Heart right ventricle (tissue), 16 donors: ENCODE measurements at regions of chr22 and their contacts with region 1.

Region 1: GRCh38 chr22:17638432-17639246 is at the start of gene BCL2L13:
- DNase-seq: peak; percentile 91
- ATAC-seq: peak; percentile 97 to 99 (median 98)
- H3K4me3 ChIP-seq: peak within 1 kb of the TSS; percentile 52 to 92 (median 76)
- H3K27ac ChIP-seq: peak within 1 kb of the TSS; percentile 93 to 100 (median 98)
- H3K4me1 ChIP-seq: peaks cover 3 to 27% (median 24%) of the 10 kb centered on the region in 9 donors
- H3K27me3 ChIP-seq: no peaks in the 10 kb centered on the region
- CTCF ChIP-seq: peak in 1 of 9 donors; percentile 17
- total RNA-seq, gene BCL2L13: 75.9 to 113 (median 91.2) TPM

Region 2: DNA sequence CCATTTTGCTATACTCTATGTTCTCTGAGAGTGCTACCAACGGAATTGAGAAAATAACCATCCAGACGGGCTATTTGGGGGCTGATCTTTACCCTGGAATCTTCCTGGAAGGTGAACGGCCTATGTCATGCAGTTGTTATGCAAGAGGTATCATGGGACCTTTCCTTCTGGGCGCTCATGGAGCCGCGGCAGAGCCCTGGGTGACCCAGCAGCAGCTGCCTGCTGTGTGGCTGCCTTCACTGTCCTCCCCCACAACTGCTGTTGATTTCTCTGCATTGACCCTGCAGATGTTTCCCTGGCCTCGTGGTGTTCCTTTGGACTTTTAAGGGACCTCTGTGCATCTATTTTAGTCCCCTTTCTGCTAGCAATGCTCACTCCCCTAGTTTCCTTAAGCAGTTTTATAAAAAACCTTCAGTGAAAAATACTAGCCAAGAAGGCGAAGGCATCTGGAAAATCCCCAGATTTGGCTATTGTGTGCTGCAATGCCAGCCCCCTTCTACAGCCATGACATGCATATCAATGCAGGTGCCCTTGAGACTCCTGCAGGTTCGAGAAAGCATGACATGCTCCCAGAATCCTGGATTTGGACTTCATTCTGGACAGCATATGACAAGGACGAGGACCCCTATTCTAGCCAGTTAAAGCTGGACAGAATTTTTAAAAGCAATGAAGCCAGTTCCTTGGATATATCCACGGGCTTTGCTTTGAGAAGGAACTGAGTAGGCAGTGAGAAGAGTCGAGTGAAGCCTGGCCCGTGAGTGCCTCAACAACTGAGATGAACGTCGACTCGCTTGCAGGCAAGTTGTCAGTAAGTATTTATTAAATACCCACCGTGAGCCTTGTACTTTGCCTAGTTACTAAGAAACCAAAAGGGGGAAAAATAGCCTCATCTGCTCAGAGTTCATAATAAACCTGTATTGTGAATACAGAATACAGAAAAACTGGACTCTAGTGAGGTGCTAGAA is 75.5 kb before region 1 on chr22 and contains the start of gene SLC25A18:
- intact Hi-C with region 1: loop called in 2 of 10 experiments (anchors 2 kb)
- DNase-seq: peak; percentile 50 to 64
- ATAC-seq: peak; percentile 78 to 94 (median 92)
- H3K4me3 ChIP-seq: peak within 1 kb of the TSS in 5 of 10 donors; percentile 1 to 23 (median 5)
- H3K27ac ChIP-seq: peak within 1 kb of the TSS; percentile 55 to 88 (median 82)
- H3K4me1 ChIP-seq: peaks cover 9 to 33% (median 21%) of the 10 kb centered on the region in 9 donors
- H3K27me3 ChIP-seq: no peaks in the 10 kb centered on the region
- CTCF ChIP-seq: peak in 2 of 9 donors; percentile 4 to 14
- total RNA-seq, gene SLC25A18: 0.65 to 13.6 (median 0.87) TPM

Region 3: DNA sequence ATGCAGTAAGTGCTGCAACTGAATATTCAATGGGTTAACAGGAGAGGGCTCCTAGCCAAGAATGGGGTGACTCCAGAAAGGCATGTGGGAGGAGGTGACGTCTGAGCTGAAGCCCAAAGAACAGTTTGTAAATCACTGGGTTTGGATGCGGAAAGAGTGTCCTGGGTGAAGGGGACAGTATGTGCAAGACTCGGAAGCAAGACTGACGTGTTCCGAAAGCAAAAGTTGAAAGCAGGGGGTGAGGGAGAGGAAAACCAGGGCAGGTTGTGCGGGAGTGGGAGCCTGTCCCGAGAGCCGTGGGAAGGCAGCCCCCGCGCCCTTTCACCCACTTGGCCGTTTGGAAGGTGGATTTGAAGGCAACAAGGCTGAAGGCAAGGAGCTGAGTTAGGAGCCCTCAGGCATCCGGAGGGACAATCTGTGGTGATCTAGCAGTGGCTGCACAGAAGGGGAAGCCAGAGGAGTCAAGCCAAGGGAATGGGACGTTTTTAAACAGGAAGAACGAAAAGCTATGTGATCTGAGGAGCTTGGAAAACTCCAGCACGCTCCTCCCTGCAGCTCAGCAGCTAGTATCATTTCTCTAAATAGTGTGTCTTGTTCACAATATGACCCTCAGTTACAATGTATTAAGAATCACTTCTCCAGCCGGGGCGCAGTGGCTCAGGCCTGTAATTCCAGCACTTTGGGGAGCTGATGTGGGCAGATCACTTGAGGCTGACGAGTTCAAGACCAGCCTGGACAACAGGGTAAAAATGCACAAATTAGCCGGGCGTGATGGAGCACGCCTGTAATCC is 67.6 kb before region 1 on chr22:
- intact Hi-C with region 1: loop called in 3 of 10 experiments (anchors 2 kb)
- DNase-seq: peak; percentile 78 to 87
- ATAC-seq: peak; percentile 84 to 96 (median 94)
- H3K4me3 ChIP-seq: peak overlapping the region in 9 of 10 donors; percentile 3 to 51 (median 41)
- H3K27ac ChIP-seq: peak overlapping the region; percentile 81 to 94 (median 86)
- H3K4me1 ChIP-seq: peaks cover 11 to 35% (median 27%) of the 10 kb centered on the region in 9 donors
- H3K27me3 ChIP-seq: no peaks in the 10 kb centered on the region
- CTCF ChIP-seq: no peak

Region 4: GRCh38 chr22:17628304-17629166 is 10.1 kb before region 1 on chr22 and contains the start of gene ATP6V1E1:
- intact Hi-C with region 1: loop called in 1 of 10 experiments (anchors 1 kb)
- DNase-seq: peak; percentile 95 to 98
- ATAC-seq: peak; percentile 99 to 100 (median 100)
- H3K4me3 ChIP-seq: peak within 1 kb of the TSS; percentile 65 to 99 (median 90)
- H3K27ac ChIP-seq: peak within 1 kb of the TSS; percentile 76 to 96 (median 91)
- H3K4me1 ChIP-seq: peaks cover 5 to 43% (median 25%) of the 10 kb centered on the region in 9 donors
- H3K27me3 ChIP-seq: no peaks in the 10 kb centered on the region
- CTCF ChIP-seq: no peak
- total RNA-seq, gene ATP6V1E1: 179 to 237 (median 218) TPM

Region 5: GRCh38 chr22:17773606-17774205 is 135.1 kb after region 1 on chr22:
- intact Hi-C with region 1: loop called in 1 of 10 experiments (anchors 10 kb)
- DNase-seq: peak in 1 of 2 donors; percentile 44
- ATAC-seq: peak; percentile 29 to 52 (median 34)
- H3K4me3 ChIP-seq: peak overlapping the region; percentile 30 to 81 (median 73)
- H3K27ac ChIP-seq: peak overlapping the region; percentile 29 to 98 (median 73)
- H3K4me1 ChIP-seq: peaks cover 3 to 84% (median 20%) of the 10 kb centered on the region in 9 donors
- H3K27me3 ChIP-seq: no peaks in the 10 kb centered on the region
- CTCF ChIP-seq: no peak